Activated CD8-positive, alpha-beta memory T cell treated with anti-CD3 and anti-CD28 coated beads, Interleukin-2, amount 10 ng/mL, durations not matched to agents 7 days and 5 days (primary cell): ENCODE measurements at regions of chr5 and their contacts with region 1.

Region 1: DNA sequence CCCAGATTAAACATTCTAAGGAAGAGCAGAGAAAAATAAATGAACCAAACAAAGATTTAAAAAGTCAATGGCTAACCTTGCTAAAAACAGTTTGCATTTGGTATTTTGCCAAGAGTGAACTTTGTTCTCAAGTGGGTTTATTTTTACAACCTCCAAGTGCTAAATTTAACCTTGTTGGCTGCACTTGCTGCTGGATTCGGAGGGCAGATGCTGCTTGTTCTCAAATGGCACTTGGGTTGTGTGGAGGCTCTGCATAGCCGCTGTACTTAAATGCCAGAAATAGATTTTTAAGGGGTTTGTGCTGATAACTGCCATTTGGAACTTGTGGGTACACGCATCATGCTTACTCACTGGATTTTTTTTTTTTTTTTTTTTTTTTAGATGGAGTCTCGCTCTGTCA is 13.3 kb upstream of the SPATA24 start:
- DNase-seq: no peak
- ATAC-seq: no peak
- H3K4me3 Mint-ChIP-seq: no peak overlapping the region
- H3K27ac Mint-ChIP-seq: peak overlapping the region; percentile 89
- H3K4me1 Mint-ChIP-seq: peaks cover 70% of the 10 kb centered on the region
- H3K27me3 Mint-ChIP-seq: no peaks in the 10 kb centered on the region

Region 2: GRCh38 chr5:139354186-139354585 is 63.0 kb before region 1 on chr5:
- CTCF ChIA-PET with region 1: no interaction called
- DNase-seq: no peak
- ATAC-seq: no peak
- H3K4me3 Mint-ChIP-seq: no peak overlapping the region
- H3K27ac Mint-ChIP-seq: no peak overlapping the region
- H3K4me1 Mint-ChIP-seq: peaks cover 16% of the 10 kb centered on the region
- H3K27me3 Mint-ChIP-seq: no peaks in the 10 kb centered on the region

Region 3: GRCh38 chr5:139403787-139404483 is 13.3 kb before region 1 on chr5 and contains the start of gene SPATA24:
- CTCF ChIA-PET with region 1: interaction called, 23 read pairs
- DNase-seq: peak; percentile 99
- ATAC-seq: peak; percentile 95
- H3K4me3 Mint-ChIP-seq: peak within 1 kb of the TSS; percentile 92
- H3K27ac Mint-ChIP-seq: peak within 1 kb of the TSS; percentile 99
- H3K4me1 Mint-ChIP-seq: peaks cover 45% of the 10 kb centered on the region
- H3K27me3 Mint-ChIP-seq: no peaks in the 10 kb centered on the region
- total RNA-seq, gene SPATA24: 5.8 to 6.2 TPM